ENCODE measurements at regions of chr20 and their contacts with region 1.

Region 1: GRCh38 chr20:45987108-45987780 is 15.2 kb upstream of the ZNF335 start:
- DNase-seq: peak; percentile 72
- H3K4me3 ChIP-seq: no peak overlapping the region
- H3K27ac ChIP-seq: no peak overlapping the region
- H3K4me1 ChIP-seq: peaks cover 3% of the 10 kb centered on the region
- CTCF ChIP-seq: peak; percentile 93

Region 2: DNA sequence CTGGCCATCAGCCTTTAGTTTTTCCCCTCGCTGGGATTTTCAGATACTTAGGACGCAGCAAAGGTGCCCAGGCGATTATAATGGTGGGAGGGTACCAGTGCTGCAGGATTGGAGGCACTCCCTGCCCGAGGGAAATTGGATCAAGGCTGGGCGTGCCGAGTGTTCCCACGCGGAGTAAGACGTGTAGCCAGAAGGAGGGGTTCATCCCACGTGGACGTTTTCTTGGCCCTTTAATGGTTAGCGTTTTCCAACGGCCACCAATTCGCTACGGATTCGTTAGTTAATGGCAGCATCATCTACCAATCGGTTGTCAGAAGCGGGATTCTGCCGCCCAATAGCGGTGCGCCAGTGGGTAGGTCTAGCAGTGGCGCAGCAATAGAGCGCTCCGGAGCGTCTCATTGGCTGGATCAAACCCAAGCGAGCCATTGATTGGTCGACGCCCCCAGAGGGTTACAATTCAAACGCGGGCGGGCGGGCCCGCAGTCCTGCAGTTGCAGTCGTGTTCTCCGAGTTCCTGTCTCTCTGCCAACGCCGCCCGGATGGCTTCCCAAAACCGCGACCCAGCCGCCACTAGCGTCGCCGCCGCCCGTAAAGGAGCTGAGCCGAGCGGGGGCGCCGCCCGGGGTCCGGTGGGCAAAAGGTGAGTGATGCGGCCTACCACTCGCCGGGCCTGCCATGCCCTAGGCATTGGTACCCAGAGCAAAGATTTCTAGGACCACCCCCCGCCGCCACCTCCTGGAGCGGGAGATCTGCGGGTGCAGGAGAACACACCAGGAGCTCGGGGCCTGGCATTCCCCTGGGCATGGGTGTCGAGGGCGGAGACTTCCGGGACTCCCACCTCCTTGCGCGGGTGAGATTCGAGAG is 174.9 kb before region 1 on chr20 and contains the start of gene UBE2C:
- CTCF ChIA-PET with region 1: no interaction called
- POLR2A ChIA-PET with region 1: no interaction called
- intact Hi-C with region 1: no loop called
- DNase-seq: peak; percentile 99
- H3K4me3 ChIP-seq: peak within 1 kb of the TSS; percentile 82
- H3K27ac ChIP-seq: peak within 1 kb of the TSS; percentile 79
- H3K4me1 ChIP-seq: peaks cover 19% of the 10 kb centered on the region
- CTCF ChIP-seq: no peak
- total RNA-seq, gene UBE2C: 225 and 269 TPM in 2 replicates

Region 3: GRCh38 chr20:45927071-45927878 is 60.0 kb before region 1 on chr20:
- CTCF ChIA-PET with region 1: no interaction called
- POLR2A ChIA-PET with region 1: no interaction called
- intact Hi-C with region 1: no loop called
- DNase-seq: no peak
- H3K4me3 ChIP-seq: no peak overlapping the region
- H3K27ac ChIP-seq: no peak overlapping the region
- H3K4me1 ChIP-seq: no peaks in the 10 kb centered on the region
- CTCF ChIP-seq: no peak

Region 4: DNA sequence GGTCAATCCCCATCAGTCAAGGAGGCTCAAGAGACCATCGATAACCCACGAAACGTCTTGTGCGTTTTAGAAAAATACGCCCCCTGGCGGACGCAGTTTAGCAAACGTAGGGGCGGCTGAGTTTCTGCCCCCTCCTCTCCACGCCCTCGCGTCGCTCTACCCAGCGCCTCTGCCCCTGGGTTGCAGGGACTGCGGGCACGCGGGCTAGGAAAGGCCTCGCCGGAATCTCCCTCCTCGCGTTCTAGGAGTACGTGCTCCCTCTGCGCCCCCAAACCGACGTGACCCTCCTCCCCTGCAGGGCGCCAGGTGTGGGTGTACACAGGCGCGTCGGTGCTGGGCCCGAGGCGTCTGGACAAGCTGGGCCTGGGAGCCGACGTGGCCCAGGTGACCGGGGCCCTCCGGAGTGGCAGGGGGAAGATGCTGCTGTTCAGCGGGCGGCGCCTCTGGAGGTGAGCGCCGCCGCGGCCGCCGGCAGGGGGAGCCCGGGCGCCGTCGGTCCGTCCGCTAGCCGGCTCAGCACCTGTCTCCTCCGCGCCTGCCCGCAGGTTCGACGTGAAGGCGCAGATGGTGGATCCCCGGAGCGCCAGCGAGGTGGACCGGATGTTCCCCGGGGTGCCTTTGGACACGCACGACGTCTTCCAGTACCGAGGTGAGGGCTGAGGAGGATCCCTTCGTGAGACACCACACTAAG is 26.7 kb after region 1 on chr20:
- CTCF ChIA-PET with region 1: interaction called, 4 read pairs
- POLR2A ChIA-PET with region 1: no interaction called
- intact Hi-C with region 1: loop called (anchors 1 kb)
- DNase-seq: peak; percentile 81
- H3K4me3 ChIP-seq: peak overlapping the region; percentile 45
- H3K27ac ChIP-seq: no peak overlapping the region
- H3K4me1 ChIP-seq: peaks cover 9% of the 10 kb centered on the region
- CTCF ChIP-seq: peak; percentile 88